ENCODE measurements at regions of chr5 and their contacts with region 1.

Region 1: DNA sequence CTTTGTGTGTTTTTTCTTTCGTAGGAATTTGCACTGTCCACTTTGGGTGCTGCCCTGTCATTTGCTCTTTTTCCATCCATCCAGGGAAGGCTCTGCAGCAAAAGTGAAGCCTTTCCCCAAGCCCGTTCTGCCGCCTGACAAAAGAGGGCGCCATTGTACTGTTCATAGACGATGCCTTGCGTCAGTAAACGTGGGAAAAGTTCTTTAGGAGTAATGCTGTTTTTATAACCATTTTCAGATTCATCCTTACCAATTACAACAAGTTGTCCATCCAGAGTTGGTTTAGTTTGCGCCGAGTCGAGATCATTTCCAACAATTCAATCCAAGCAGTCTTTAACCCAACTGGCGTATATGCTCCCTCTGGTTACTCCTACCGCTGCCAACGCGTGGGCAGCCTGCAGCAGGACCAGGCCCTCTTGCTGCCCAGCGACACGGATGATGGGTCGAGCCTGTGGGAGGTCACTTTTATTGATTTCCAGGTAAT is 34.3 kb upstream of the RPS23 start:
- DNase-seq: peak; percentile 62 to 70 (median 64)
- H3K4me3 ChIP-seq: no peak overlapping the region
- H3K27ac ChIP-seq: no peak overlapping the region
- H3K4me1 ChIP-seq: peaks cover 9 to 44% (median 26%) of the 10 kb centered on the region in 4 experiments
- H3K27me3 ChIP-seq: no peaks in the 10 kb centered on the region

Region 2: GRCh38 chr5:82325155-82325554 is 12.7 kb after region 1 on chr5:
- CTCF ChIA-PET with region 1: interaction called, 19 read pairs
- POLR2A ChIA-PET with region 1: no interaction called
- DNase-seq: no peak
- H3K4me3 ChIP-seq: no peak overlapping the region
- H3K27ac ChIP-seq: no peak overlapping the region
- H3K4me1 ChIP-seq: no peaks in the 10 kb centered on the region
- H3K27me3 ChIP-seq: no peaks in the 10 kb centered on the region

Measured in common myeloid progenitor, CD34-positive (primary cell).